Calu3 (cell line): ENCODE measurements at regions of chr1 and their contacts with region 1.

Region 1: GRCh38 chr1:6401673-6402072 is 8.1 kb upstream of the ACOT7 start:
- DNase-seq: no peak
- H3K4me3 Mint-ChIP-seq: no peak overlapping the region
- H3K27ac Mint-ChIP-seq: no peak overlapping the region
- H3K4me1 Mint-ChIP-seq: no peaks in the 10 kb centered on the region
- H3K27me3 Mint-ChIP-seq: peaks cover 23% of the 10 kb centered on the region
- CTCF ChIP-seq: no peak

Region 2: DNA sequence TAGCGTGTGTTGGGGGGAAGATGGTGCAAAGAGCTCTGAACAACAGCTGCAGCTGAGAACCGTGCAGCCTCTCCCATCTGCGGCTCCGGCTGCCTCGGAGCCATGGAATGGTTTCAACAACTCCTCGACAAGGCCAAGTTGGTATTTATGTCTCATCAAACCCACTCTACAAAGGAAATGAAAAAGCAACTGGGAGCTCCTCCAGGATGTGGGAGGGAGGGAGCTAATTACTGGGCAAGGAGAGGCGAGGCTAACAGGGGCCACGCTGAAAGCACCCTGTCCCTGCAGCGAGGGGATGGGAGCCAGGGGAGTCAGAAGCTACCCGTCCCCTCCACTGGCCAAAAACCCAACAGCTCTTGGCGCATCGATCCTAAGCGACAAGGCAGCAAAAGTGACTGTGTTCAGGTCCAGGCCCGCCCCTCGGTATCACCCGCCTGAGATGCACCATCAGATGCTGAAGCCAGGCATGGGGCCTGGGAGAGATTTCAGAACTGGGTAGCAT is 71.2 kb before region 1 on chr1:
- CTCF ChIA-PET with region 1: no interaction called
- intact Hi-C with region 1: no loop called
- DNase-seq: no peak
- H3K4me3 Mint-ChIP-seq: no peak overlapping the region
- H3K27ac Mint-ChIP-seq: no peak overlapping the region
- H3K4me1 Mint-ChIP-seq: no peaks in the 10 kb centered on the region
- H3K27me3 Mint-ChIP-seq: no peaks in the 10 kb centered on the region
- CTCF ChIP-seq: no peak

Region 3: GRCh38 chr1:6343506-6344405 is 57.9 kb before region 1 on chr1:
- CTCF ChIA-PET with region 1: interaction called, 5 read pairs
- intact Hi-C with region 1: loop called (anchors 2 kb)
- DNase-seq: peak; percentile 79
- H3K4me3 Mint-ChIP-seq: no peak overlapping the region
- H3K27ac Mint-ChIP-seq: peak overlapping the region; percentile 63
- H3K4me1 Mint-ChIP-seq: peaks cover 13% of the 10 kb centered on the region
- H3K27me3 Mint-ChIP-seq: no peaks in the 10 kb centered on the region
- CTCF ChIP-seq: peak; percentile 74

Region 4: DNA sequence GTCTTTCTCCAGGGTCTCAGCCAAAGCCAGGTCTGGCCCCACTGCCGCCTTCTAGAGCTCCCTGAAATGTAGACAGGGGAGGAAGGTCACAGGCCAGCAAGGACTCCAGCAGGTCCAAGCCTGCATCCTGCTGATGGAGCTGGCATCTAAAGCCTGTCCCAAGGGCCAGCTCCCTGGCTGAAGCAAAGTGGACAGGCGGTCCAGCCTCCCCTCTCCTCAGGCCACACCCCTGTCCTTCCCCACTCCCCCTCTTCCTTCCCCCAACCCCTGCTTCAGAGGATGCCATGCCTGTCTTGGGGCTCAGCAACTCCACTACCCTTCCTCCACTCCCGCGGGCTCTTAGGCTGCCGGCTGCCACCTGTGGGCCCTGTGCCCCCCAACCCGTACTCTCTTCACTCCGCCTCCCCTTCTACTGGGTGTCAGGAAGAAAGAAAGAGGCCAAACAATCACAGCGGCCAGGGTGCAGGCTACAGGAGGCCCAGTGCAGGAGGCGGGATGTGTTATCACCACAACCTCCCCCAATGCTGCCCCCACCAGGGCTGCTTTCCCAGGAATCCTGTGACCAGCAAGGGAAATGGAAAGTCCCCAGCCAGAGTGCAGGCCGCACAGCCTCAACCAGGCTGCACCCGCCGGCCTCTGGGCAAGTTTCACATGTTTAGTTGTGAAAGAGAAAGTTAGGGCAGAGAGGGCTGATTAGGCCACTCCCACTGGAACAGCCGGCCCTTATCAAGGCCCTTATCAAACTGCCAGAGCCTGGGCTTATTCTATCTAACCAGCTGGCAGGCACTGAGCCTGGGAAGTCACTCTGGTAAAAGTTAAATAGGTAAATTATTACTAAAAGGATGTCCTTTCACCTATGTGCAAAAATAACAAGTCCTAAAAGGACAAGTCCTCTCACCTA is 42.2 kb before region 1 on chr1:
- CTCF ChIA-PET with region 1: interaction called, 3 read pairs
- intact Hi-C with region 1: loop called (anchors 1 kb)
- DNase-seq: peak; percentile 53
- H3K4me3 Mint-ChIP-seq: no peak overlapping the region
- H3K27ac Mint-ChIP-seq: no peak overlapping the region
- H3K4me1 Mint-ChIP-seq: no peaks in the 10 kb centered on the region
- H3K27me3 Mint-ChIP-seq: no peaks in the 10 kb centered on the region
- CTCF ChIP-seq: no peak